ENCODE measurements at regions of chr3 and their contacts with region 1.

Region 1: DNA sequence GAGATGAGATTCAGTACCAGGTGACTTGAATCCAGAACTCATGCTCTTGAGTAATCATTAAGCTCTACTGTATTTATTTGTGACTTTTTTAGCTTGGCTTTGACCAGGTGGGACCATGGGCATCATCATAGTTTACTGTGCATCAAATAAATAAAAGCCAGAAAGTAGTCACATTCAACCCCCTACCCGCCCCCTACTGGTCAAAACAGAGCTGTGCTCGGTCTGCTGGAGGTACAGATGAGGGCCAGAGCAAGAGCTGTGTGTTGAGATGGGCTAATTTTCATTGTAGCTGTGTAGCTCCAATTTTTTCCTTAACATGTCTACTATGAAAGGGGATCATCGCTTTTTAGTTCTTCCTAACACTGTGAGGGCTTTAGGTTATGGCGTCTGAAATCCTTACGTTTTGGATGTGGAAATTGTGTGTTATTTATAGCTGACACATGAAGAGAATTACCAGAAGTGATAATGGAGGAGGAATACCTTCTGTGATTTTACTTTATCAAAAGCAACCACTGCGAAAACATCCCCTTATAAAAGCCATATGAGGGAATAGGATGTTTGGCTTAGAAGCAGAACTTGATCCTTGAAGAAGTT is 375.1 kb downstream of the PTPRG start:
- DNase-seq: peak; percentile 35
- H3K4me3 ChIP-seq: no peak overlapping the region
- H3K27ac ChIP-seq: no peak overlapping the region
- H3K4me1 ChIP-seq: peaks cover 0 to 3% of the 10 kb centered on the region in 2 experiments; a peak in 1 of 4 replicates
- H3K27me3 ChIP-seq: no peaks in the 10 kb centered on the region
- CTCF ChIP-seq: peak; percentile 63
- EP300 ChIP-seq: no peak
- RAD21 ChIP-seq: peak; percentile 56

Region 2: GRCh38 chr3:61922118-61922517 is 14.3 kb before region 1 on chr3:
- CTCF ChIA-PET with region 1: interaction called, 11 read pairs
- POLR2A ChIA-PET with region 1: no interaction called
- DNase-seq: no peak
- H3K4me3 ChIP-seq: no peak overlapping the region
- H3K27ac ChIP-seq: no peak overlapping the region
- H3K4me1 ChIP-seq: peaks cover 5 to 8% of the 10 kb centered on the region in 2 experiments; a peak in 2 of 4 replicates
- H3K27me3 ChIP-seq: no peaks in the 10 kb centered on the region
- CTCF ChIP-seq: no peak
- EP300 ChIP-seq: no peak
- RAD21 ChIP-seq: no peak

Region 3: DNA sequence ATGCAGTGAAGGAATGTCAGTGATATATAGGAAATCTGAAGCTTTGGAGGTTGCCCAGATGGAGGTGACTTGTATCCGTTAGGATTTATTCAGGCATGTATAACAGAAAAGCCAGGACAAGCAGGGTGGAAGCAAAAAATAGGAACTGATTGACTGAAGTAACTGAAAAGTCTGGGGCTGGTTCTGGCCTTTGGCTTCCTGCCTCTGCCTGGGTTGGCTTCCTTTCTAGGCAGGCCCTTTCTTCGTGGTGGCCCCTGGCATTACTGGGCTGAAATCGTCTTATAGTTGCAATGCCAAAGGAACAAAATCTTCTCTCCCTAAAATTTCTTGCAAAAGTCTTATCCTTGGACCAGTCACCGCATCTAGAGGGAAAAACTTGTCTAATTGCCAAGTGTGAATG is 11.0 kb after region 1 on chr3:
- CTCF ChIA-PET with region 1: interaction called, 23 read pairs
- POLR2A ChIA-PET with region 1: no interaction called
- DNase-seq: no peak
- H3K4me3 ChIP-seq: no peak overlapping the region
- H3K27ac ChIP-seq: no peak overlapping the region
- H3K4me1 ChIP-seq: no peaks in the 10 kb centered on the region
- H3K27me3 ChIP-seq: no peaks in the 10 kb centered on the region
- CTCF ChIP-seq: no peak
- EP300 ChIP-seq: no peak
- RAD21 ChIP-seq: no peak

Measured in SK-N-SH (cell line).